Caco-2 (cell line): ENCODE measurements at regions of chr13 and their contacts with region 1.

Region 1: DNA sequence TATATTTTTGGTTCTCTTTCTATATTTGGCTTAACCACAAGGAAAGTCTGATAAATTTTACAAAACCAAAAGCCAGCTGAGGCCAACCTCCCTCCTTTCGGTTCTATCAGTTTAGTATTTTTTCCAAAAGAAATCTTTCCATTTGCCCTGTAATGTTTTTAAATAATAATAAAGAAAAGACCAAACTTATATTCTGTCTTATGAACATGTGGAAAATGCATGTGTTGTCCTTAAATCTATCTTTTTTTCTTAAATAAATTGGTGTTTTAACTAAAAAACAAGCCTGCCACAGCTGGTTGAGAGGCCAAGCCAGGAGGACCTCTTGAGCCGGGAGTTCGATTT is 113.6 kb downstream of the SACS start:
- DNase-seq: no peak
- H3K4me3 ChIP-seq: no peak overlapping the region
- H3K4me3 Mint-ChIP-seq: no peak overlapping the region
- H3K27ac Mint-ChIP-seq: no peak overlapping the region
- H3K4me1 ChIP-seq: no peaks in the 10 kb centered on the region; the same call in 1 of the 2 replicates
- H3K4me1 Mint-ChIP-seq: peaks cover 8% of the 10 kb centered on the region
- H3K27me3 ChIP-seq: peaks cover 2% of the 10 kb centered on the region; the same call in 1 of the 2 replicates
- H3K27me3 Mint-ChIP-seq: peaks cover 2% of the 10 kb centered on the region
- CTCF ChIP-seq: no peak

Region 2: DNA sequence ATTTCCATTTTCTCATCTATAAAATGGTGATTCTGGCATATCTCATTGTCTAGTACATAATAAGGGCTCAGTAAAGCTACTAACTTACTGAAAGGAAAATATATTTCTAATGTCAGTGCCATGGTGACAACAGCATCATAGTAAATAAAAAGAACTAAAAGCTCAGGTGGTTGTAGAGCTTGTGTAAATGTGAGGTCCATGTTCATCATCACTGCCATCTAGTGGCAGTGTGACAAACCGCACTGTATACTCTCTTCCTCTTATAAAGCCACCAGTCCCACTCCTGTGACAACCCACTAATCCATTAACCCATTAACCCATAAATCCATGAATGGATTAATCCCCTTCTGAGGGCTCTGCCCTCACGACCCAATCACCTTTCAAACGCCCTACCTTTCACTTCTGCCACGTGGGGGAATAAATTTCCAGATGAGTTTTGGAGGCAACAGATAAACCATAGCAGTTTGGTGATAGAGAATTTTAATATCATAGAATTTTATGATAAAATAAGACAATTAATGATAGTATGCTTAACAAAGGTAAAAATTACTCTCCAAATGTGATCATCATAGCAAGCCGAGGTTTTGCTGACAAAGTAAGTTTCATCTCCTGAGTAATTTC is 299.5 kb before region 1 on chr13:
- CTCF ChIA-PET with region 1: interaction called, 4 read pairs
- POLR2A ChIA-PET with region 1: no interaction called
- intact Hi-C with region 1: loop called (anchors 1 kb)
- DNase-seq: peak; percentile 56 to 58
- H3K4me3 ChIP-seq: no peak overlapping the region
- H3K4me3 Mint-ChIP-seq: no peak overlapping the region
- H3K27ac Mint-ChIP-seq: no peak overlapping the region
- H3K4me1 ChIP-seq: no peaks in the 10 kb centered on the region
- H3K4me1 Mint-ChIP-seq: no peaks in the 10 kb centered on the region
- H3K27me3 ChIP-seq: no peaks in the 10 kb centered on the region; the same call in 1 of the 2 replicates
- H3K27me3 Mint-ChIP-seq: no peaks in the 10 kb centered on the region
- CTCF ChIP-seq: peak; percentile 82 to 87